ENCODE measurements at regions of chr1 and their contacts with region 1.

Region 1: GRCh38 chr1:206651958-206652890 is 16.9 kb downstream of the DYRK3 start:
- DNase-seq: no peak
- ATAC-seq: no peak
- H3K4me3 ChIP-seq: no peak overlapping the region
- H3K4me3 Mint-ChIP-seq: no peak overlapping the region
- H3K27ac ChIP-seq: no peak overlapping the region
- H3K27ac Mint-ChIP-seq: no peak overlapping the region
- H3K4me1 ChIP-seq: no peaks in the 10 kb centered on the region
- H3K4me1 Mint-ChIP-seq: no peaks in the 10 kb centered on the region
- H3K27me3 ChIP-seq: no peaks in the 10 kb centered on the region
- H3K27me3 Mint-ChIP-seq: peaks cover 6% of the 10 kb centered on the region
- CTCF ChIP-seq: no peak

Region 2: DNA sequence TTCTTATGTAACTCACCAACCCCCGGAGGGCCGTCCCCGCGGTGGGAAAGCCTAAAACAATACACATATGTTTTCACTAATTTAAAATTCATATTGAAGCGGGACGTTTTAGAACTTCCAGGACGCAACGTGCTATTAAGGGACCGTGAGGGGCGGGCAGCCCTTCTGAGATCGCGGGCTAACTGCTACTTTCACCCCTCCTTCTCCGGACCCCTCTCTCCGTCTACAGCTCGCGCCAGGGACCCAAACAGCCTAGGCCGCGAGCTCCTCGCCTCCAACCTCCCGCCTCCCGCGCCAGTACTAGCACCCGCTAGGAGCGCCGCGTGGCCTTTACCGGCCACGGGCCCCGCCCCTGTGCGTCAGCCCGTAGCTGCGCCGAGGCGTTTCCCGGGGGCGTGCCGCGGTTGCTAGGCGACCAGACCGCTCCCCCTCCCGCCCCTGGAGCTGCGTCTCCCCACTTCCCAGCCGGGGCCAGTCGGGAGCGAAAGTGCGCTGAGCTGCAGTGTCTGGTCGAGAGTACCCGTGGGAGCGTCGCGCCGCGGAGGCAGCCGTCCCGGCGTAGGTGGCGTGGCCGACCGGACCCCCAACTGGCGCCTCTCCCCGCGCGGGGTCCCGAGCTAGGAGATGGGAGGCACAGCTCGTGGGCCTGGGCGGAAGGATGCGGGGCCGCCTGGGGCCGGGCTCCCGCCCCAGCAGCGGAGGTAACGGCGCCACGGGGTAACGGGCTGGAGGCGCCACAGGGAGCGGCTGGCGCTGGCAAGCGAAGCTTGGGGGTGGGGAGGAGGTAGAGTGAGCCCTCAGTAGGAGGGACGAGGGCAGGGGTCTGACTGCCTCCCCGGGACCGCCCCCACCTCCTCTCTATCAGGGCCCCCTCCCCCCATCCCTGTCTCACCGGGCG is 16.9 kb before region 1 on chr1 and contains the start of gene DYRK3:
- CTCF ChIA-PET with region 1: interaction called, 274 read pairs
- POLR2A ChIA-PET with region 1: interaction called, 7 read pairs
- intact Hi-C with region 1: no loop called
- DNase-seq: peak; percentile 63 to 94 (median 88)
- ATAC-seq: peak; percentile 94
- H3K4me3 ChIP-seq: peak within 1 kb of the TSS; percentile 58 to 79
- H3K4me3 Mint-ChIP-seq: peak within 1 kb of the TSS; percentile 85
- H3K27ac ChIP-seq: peak within 1 kb of the TSS; percentile 9 to 12
- H3K27ac Mint-ChIP-seq: peak within 1 kb of the TSS; percentile 70
- H3K4me1 ChIP-seq: peaks cover 15% of the 10 kb centered on the region
- H3K4me1 Mint-ChIP-seq: peaks cover 16% of the 10 kb centered on the region
- H3K27me3 ChIP-seq: no peaks in the 10 kb centered on the region
- H3K27me3 Mint-ChIP-seq: peaks cover 15% of the 10 kb centered on the region
- CTCF ChIP-seq: no peak
- total RNA-seq, gene DYRK3: 0.94 to 1.4 TPM

Region 3: DNA sequence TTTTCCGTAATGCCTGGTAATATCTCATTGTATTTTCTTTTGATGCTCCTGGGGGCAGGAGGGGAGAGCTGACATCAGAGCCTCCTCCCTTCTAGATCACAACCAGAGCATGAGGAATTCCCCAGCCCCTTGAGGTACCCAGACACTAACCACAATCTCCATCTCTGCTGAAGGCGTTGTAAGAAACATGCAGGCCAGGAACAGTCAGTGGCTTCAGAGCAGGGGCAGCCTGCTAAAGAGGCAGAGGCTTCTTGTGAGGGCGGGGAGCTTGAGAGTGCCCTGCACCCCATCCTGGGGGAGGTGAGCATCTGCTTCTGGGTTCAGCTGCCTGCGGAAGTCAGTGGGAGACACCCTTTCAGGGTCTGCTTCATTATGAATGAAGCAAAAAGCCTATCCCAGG is 51.4 kb after region 1 on chr1:
- CTCF ChIA-PET with region 1: no interaction called
- POLR2A ChIA-PET with region 1: no interaction called
- intact Hi-C with region 1: no loop called
- DNase-seq: peak in 7 of 9 experiments; percentile 20 to 93 (median 67)
- ATAC-seq: peak; percentile 86
- H3K4me3 ChIP-seq: no peak overlapping the region
- H3K4me3 Mint-ChIP-seq: peak overlapping the region; percentile 68
- H3K27ac ChIP-seq: peak overlapping the region in 1 of 2 experiments; percentile 69
- H3K27ac Mint-ChIP-seq: peak overlapping the region; percentile 91
- H3K4me1 ChIP-seq: peaks cover 77% of the 10 kb centered on the region
- H3K4me1 Mint-ChIP-seq: peaks cover 92% of the 10 kb centered on the region
- H3K27me3 ChIP-seq: no peaks in the 10 kb centered on the region
- H3K27me3 Mint-ChIP-seq: no peaks in the 10 kb centered on the region
- CTCF ChIP-seq: no peak

Region 4: DNA sequence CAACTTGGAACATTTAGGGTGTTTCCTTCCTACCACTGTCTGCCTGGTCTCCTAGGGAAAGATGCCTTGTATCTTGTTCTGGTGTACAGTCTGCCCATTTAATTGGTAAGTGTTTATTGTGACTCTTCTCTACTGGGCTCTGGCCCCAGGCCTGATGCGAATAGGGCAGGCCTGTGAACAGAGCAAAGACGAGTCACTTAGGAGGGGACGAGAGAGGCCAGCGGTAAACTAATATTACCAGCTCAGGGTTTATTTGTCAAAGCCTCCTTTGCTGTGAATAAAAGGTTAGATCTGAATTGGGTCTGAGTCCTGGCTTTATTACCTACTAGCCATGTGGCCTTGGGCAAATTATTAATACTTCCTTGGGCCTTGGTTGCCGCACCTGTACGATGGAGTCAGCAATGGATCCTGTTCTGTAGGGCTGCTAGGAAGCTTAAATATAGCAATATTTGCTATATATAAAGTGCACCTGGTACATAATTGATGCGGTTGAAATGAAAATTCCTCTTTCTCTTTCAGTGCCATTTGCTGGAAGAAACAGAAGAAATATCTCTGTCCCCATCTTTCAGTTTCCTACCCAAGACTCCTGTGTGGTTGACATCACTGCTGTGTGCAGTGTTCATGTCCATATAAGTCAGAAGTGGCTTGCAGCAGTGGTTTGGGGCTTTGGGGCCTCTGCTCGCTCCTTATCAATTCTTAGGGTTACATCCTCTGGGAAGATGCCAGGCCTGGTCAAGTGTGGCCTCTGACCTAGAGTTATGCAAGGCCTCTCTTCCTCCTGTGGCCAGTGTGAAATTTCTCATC is 64.8 kb after region 1 on chr1:
- CTCF ChIA-PET with region 1: no interaction called
- POLR2A ChIA-PET with region 1: no interaction called
- intact Hi-C with region 1: no loop called
- DNase-seq: peak in 1 of 9 experiments; percentile 55
- ATAC-seq: no peak
- H3K4me3 ChIP-seq: no peak overlapping the region
- H3K4me3 Mint-ChIP-seq: peak overlapping the region; percentile 27
- H3K27ac ChIP-seq: peak overlapping the region in 1 of 2 experiments; percentile 69
- H3K27ac Mint-ChIP-seq: peak overlapping the region; percentile 95
- H3K4me1 ChIP-seq: peaks cover 57% of the 10 kb centered on the region
- H3K4me1 Mint-ChIP-seq: peaks cover 84% of the 10 kb centered on the region
- H3K27me3 ChIP-seq: no peaks in the 10 kb centered on the region
- H3K27me3 Mint-ChIP-seq: no peaks in the 10 kb centered on the region
- CTCF ChIP-seq: no peak

Measured in CD8-positive, alpha-beta T cell (primary cell).